ENCODE measurements at regions of chr1 and their contacts with region 1.

Region 1: GRCh38 chr1:154669464-154670282 is 61.7 kb upstream of the ADAR start:
- DNase-seq: peak; percentile 53 to 81 (median 72)
- ATAC-seq: peak; percentile 100
- H3K4me3 ChIP-seq: no peak overlapping the region
- H3K27ac ChIP-seq: no peak overlapping the region
- H3K4me1 ChIP-seq: no peaks in the 10 kb centered on the region
- H3K27me3 ChIP-seq: no peaks in the 10 kb centered on the region
- CTCF ChIP-seq: peak; percentile 77

Region 2: DNA sequence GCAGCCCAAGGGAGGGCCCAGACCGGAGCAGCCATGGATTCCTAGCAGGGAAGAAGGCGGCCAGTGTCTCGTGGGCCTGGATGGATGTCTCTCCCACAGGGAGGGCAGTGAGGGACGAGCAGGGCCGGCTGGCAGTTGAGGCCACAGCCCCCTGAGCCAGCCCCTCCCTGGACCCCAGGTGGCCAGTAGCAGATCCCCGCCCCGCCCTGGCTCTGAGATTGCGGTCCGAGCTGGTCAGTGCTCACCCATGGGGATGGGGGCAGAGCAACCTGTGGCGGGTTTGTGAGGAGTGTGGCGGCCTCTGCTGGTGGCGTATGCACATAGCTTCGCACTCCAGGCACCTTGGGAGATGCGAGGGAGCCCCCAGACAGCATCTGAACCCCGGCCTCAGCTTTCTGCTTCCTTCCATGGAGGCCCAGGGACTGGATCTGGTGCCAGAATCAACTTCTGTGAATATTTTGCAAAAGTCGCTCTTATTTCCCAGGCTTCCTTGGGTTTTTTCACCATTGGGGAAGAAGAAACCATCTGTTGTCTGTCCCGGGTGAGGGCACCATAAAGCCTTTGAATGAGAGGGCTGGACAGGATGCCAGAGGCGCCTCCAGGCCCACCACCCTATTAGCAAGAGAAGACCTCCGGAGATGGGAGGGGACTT is 208.8 kb after region 1 on chr1:
- intact Hi-C with region 1: loop called in 1 of 2 experiments (anchors 2 kb)
- DNase-seq: peak in 3 of 4 donors; percentile 78 to 92 (median 79)
- ATAC-seq: peak; percentile 99
- H3K4me3 ChIP-seq: no peak overlapping the region
- H3K27ac ChIP-seq: no peak overlapping the region
- H3K4me1 ChIP-seq: no peaks in the 10 kb centered on the region
- H3K27me3 ChIP-seq: no peaks in the 10 kb centered on the region
- CTCF ChIP-seq: peak; percentile 80 to 92